Adrenal gland (tissue), 19 donors: ENCODE measurements at regions of chr11 and their contacts with region 1.

Region 1: GRCh38 chr11:78416305-78417178 is 1.1 kb downstream of the GAB2 start:
- DNase-seq: peak; percentile 90 to 97 (median 91)
- H3K4me3 ChIP-seq: peak overlapping the region in 3 of 4 donors; percentile 57 to 82 (median 78)
- H3K27ac ChIP-seq: peak overlapping the region; percentile 94 to 100 (median 98)
- H3K4me1 ChIP-seq: peaks cover 10 to 51% of the 10 kb centered on the region in 2 donors
- H3K27me3 ChIP-seq: no peaks in the 10 kb centered on the region
- CTCF ChIP-seq: peak; percentile 26 to 57 (median 52)
- POLR2A ChIP-seq: peak; percentile 90 to 95

Region 2: GRCh38 chr11:78139422-78140391 is 276.8 kb before region 1 on chr11 and contains the start of gene ALG8:
- intact Hi-C with region 1: no loop called
- DNase-seq: peak; percentile 95 to 98 (median 97)
- H3K4me3 ChIP-seq: peak within 1 kb of the TSS; percentile 31 to 80 (median 64)
- H3K27ac ChIP-seq: peak within 1 kb of the TSS in 4 of 5 donors; percentile 38 to 81 (median 60)
- H3K4me1 ChIP-seq: peaks cover 11 to 23% of the 10 kb centered on the region in 2 donors
- H3K27me3 ChIP-seq: no peaks in the 10 kb centered on the region
- CTCF ChIP-seq: no peak
- POLR2A ChIP-seq: peak; percentile 59 to 84
- total RNA-seq, gene ALG8: 28.9 to 64.0 (median 49.2) TPM

Region 3: GRCh38 chr11:78188286-78189173 is 228.0 kb before region 1 on chr11 and contains the starts of genes KCTD21 and USP35:
- intact Hi-C with region 1: loop called in 1 of 2 experiments (anchors 2 kb)
- DNase-seq: peak; percentile 97 to 99 (median 98)
- H3K4me3 ChIP-seq: peak within 1 kb of the TSS; percentile 73 to 97 (median 90)
- H3K27ac ChIP-seq: peak within 1 kb of the TSS; percentile 87 to 97 (median 91)
- H3K4me1 ChIP-seq: peaks cover 36 to 67% of the 10 kb centered on the region in 2 donors
- H3K27me3 ChIP-seq: no peaks in the 10 kb centered on the region
- CTCF ChIP-seq: peak in 1 of 6 experiments; percentile 15
- POLR2A ChIP-seq: peak; percentile 70 to 79
- total RNA-seq, gene KCTD21: 17.0 to 32.9 (median 28.3) TPM
- total RNA-seq, gene USP35: 13.6 to 47.9 (median 34.0) TPM

Region 4: GRCh38 chr11:78231962-78232501 is 184.5 kb before region 1 on chr11:
- intact Hi-C with region 1: loop called in 1 of 2 experiments (anchors 5 kb)
- DNase-seq: peak in 5 of 7 donors; percentile 54 to 76 (median 67)
- H3K4me3 ChIP-seq: no peak overlapping the region
- H3K27ac ChIP-seq: peak overlapping the region in 4 of 5 donors; percentile 19 to 65 (median 50)
- H3K4me1 ChIP-seq: peaks cover 13 to 28% of the 10 kb centered on the region in 2 donors
- H3K27me3 ChIP-seq: no peaks in the 10 kb centered on the region
- CTCF ChIP-seq: no peak
- POLR2A ChIP-seq: no peak

Region 5: DNA sequence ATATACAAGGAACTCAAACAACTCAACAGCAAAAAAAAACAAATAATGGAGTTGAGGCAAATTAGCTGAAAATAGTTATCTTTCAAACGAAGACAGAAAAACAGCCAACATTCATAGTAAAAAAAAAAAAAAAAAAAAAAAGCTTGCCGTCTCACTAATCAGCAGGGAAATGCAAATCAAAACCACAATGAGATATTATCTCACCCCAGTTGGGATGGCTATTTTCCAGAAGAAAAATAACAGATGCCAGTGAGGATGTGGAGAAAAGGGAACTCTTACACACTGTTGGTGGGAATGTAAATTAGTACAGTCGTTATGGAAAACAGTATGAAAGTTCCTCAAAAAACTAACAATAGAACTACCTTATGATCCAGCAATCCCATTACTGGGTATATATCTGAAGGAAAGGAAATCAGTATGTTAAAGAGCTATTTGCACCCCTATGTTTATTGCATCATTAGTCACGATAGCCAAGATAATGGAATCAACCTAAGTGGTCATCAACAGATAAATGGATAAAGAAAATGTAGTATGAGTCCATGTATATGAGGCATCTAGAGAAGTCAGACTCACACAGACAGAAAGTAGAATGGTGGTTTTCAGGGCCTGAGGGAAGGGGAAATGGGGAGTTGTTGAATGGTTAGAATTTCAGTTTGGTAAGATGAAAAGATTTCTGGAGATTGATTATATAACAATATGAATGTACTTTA is 171.8 kb before region 1 on chr11:
- intact Hi-C with region 1: loop called in 1 of 2 experiments (anchors 10 kb)
- DNase-seq: no peak
- H3K4me3 ChIP-seq: no peak overlapping the region
- H3K27ac ChIP-seq: no peak overlapping the region
- H3K4me1 ChIP-seq: no peaks in the 10 kb centered on the region
- H3K27me3 ChIP-seq: no peaks in the 10 kb centered on the region
- CTCF ChIP-seq: no peak
- POLR2A ChIP-seq: no peak

Region 6: GRCh38 chr11:78564490-78565467 is 148.2 kb after region 1 on chr11:
- intact Hi-C with region 1: loop called (anchors 5 kb)
- DNase-seq: peak in 5 of 7 donors; percentile 28 to 66 (median 58)
- H3K4me3 ChIP-seq: no peak overlapping the region
- H3K27ac ChIP-seq: no peak overlapping the region
- H3K4me1 ChIP-seq: peaks cover 8 to 31% of the 10 kb centered on the region in 2 donors
- H3K27me3 ChIP-seq: no peaks in the 10 kb centered on the region
- CTCF ChIP-seq: peak; percentile 73 to 93 (median 80)
- POLR2A ChIP-seq: no peak

Region 7: DNA sequence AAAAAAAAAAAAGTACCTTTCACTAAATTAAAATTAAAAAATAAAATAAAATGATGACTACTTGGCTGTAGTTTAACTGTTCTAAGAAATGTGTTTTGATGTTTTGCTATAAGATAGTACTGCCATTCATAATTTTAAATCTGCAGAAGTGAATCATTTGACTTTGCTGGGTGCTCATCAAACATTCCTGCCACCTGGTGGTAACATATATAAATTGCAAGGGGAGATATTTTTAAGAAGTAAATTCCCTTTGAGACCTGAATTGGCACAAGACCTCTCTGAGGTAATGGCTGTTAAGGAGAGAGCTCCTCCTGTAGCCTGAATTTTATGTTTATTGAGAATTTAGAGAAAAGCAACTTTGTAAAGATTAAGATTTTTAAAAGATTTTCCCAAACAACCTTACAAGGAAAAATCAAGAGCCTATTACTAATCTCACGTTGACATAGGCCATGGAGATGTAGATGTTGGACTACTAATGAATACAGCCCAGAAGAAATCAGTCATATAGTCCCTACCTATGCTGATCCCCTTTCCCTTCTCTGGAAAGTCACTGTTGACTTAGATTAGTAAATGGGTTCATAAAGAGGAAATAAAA is 170.0 kb after region 1 on chr11:
- intact Hi-C with region 1: no loop called
- DNase-seq: no peak
- H3K4me3 ChIP-seq: no peak overlapping the region
- H3K27ac ChIP-seq: no peak overlapping the region
- H3K4me1 ChIP-seq: no peaks in the 10 kb centered on the region
- H3K27me3 ChIP-seq: no peaks in the 10 kb centered on the region
- CTCF ChIP-seq: peak in 5 of 6 experiments; percentile 6 to 45 (median 26)
- POLR2A ChIP-seq: no peak